Activated CD8-positive, alpha-beta T cell treated with anti-CD3 and anti-CD28 coated beads, Interleukin-2, amount 10 ng/mL, durations not matched to agents 7 days and 5 days (primary cell): ENCODE measurements at regions of chr12 and their contacts with region 1.

Region 1: GRCh38 chr12:98644711-98645402 is at the starts of genes APAF1 and IKBIP:
- DNase-seq: peak; percentile 97
- ATAC-seq: peak; percentile 89
- H3K4me3 Mint-ChIP-seq: peak within 1 kb of the TSS; percentile 96
- H3K27ac Mint-ChIP-seq: peak within 1 kb of the TSS; percentile 98
- H3K4me1 Mint-ChIP-seq: peaks cover 41% of the 10 kb centered on the region
- H3K27me3 Mint-ChIP-seq: no peaks in the 10 kb centered on the region
- total RNA-seq, gene APAF1: 33.4 to 35.9 TPM
- total RNA-seq, gene IKBIP: 35.4 to 35.8 TPM

Region 2: DNA sequence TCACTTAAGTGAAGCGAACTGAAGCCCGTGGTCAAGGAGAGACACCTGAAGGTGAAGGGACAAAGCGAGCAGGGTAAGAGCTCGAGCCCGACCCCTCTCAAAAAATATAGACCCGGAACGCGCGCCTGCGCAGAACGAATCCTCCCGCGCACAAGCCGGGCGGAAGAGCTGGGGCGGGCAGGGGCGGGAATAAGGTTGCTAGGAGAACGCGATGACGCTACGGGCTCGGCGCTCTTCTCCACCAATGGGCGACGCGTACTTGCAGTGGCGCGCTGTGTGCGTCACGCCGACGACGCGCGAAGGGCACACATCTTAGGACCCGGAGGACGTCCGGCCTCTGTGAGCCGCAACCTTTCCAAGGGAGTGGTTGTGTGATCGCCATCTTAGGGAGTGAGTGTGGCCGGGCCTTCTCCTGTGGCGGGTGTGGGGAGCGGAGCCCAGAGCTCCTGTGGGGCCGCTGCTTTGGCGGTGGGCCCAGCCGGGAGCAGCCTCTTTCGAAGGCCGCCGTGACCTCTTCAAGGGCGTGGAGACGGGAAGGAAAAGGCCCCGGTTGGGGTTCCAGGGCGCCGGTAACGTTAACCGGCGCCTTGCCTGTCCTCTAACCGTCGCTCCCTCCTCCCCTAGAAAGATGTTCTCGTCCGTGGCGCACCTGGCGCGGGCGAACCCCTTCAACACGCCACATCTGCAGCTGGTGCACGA is 51.4 kb before region 1 on chr12 and contains the start of gene SLC25A3:
- CTCF ChIA-PET with region 1: interaction called, 8 read pairs
- POLR2A ChIA-PET with region 1: interaction called, 37 read pairs
- DNase-seq: peak; percentile 96
- ATAC-seq: peak; percentile 96
- H3K4me3 Mint-ChIP-seq: peak within 1 kb of the TSS; percentile 84
- H3K27ac Mint-ChIP-seq: peak within 1 kb of the TSS; percentile 98
- H3K4me1 Mint-ChIP-seq: peaks cover 30% of the 10 kb centered on the region
- H3K27me3 Mint-ChIP-seq: no peaks in the 10 kb centered on the region
- total RNA-seq, gene SLC25A3: 407 to 440 TPM

Region 3: DNA sequence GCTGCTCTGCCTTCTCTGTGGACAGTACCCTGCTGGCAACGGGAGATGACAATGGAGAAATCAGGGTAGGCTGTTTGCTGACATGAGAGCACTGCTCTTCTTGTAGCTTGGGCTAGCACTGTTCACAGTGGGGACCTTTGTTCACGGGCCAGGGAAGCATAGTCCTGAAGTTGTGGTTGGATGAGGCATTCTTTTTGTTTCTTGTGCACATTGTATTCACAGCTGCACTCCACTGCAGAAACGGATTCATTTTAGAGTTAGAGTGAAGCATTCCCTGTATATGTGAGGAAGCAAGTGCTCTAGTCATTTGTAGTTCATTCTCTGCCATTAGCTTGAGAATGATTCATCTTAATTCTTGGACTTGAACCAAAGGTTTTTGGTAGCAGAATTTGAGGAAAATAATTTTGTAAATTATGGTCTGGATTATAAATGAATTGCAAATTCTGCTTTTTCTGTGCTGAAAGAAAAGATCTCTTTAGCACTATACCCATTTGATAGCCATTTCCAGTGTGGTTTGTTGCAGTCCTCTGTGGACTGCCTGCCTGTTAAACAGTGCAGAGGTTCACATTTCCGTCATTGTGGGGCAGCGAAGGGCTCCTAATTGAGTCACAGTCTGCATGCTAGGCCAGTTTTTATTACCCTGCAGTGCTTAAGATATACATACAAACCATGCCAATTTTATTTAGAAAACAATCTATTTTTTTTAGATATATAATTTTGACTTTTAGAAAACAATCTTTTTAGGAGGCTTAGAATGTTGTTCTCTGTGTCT is 80.8 kb after region 1 on chr12:
- CTCF ChIA-PET with region 1: no interaction called
- POLR2A ChIA-PET with region 1: no interaction called
- DNase-seq: peak; percentile 67
- ATAC-seq: peak; percentile 88
- H3K4me3 Mint-ChIP-seq: no peak overlapping the region
- H3K27ac Mint-ChIP-seq: no peak overlapping the region
- H3K4me1 Mint-ChIP-seq: peaks cover 4% of the 10 kb centered on the region
- H3K27me3 Mint-ChIP-seq: no peaks in the 10 kb centered on the region